Activated CD4-positive, alpha-beta memory T cell treated with anti-CD3 and anti-CD28 coated beads, Interleukin-2, amount 10 ng/mL, durations not matched to agents 7 days and 5 days (primary cell): ENCODE measurements at regions of chr18 and their contacts with region 1.

Region 1: DNA sequence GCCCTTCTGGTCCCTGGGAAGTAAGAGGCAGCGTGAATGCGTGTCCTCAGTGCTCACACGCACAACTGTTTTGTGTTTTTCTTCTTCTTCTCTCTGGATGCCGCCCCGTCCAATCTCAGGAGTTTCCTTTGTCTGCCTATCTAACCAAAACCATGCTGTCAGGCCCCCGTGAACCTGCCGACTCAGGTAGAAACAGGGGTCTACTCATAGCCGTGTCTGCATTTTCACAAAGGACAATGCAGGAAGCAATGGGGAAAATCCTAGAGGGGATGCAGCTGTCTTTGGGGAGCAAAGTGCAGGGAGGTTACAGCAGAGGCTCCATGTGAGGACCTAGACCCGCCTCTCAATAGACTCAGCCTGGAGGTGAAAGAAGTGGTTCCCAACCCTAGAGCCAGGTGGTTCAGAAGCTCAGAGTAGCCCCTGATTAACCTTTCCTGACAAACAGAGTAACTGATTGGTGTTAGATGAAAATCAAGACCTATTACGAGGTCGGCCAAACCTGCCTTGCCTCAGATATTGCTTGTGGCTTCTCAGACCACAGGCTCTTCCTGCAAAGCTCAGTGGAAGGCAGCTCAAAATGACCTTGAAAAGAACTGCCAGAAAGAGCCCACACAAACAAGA is 49.3 kb downstream of the CD226 start:
- DNase-seq: peak; percentile 62
- H3K4me3 Mint-ChIP-seq: peak overlapping the region; percentile 70
- H3K27ac Mint-ChIP-seq: peak overlapping the region; percentile 89
- H3K4me1 Mint-ChIP-seq: peaks cover 76% of the 10 kb centered on the region
- H3K27me3 Mint-ChIP-seq: no peaks in the 10 kb centered on the region

Region 2: DNA sequence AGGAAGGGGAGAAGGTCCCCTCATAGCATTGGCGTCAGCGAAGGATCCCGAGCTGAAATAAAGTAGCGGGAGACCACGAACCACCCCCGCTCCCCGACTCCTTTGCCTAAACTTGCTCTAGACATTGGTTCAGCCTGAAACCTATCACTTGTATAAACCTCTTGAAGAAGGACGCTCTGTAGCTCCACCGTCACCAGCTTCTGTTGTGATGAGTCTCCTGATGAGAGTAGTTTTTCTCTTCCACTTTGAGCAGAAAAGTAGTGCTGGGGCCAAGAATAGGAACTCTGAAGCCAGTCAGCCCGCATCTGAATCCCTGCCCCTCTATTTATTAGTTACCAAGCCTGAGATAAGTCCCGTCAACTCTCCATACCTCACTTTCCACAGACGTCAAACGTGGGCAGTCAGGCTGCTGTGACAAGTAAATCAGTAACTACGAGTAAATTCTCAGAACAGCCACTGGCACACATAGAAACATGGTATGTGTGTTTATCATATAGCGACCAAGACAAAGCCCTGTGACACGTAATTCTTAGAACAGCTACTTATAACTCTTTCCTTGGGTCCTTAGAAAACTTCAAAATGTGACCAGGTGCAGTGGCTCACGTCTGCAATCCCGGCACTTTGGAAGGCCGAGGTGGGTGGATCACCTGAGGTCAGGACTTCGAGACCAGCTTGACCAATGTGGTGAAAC is 12.4 kb before region 1 on chr18:
- CTCF ChIA-PET with region 1: interaction called, 9 read pairs
- POLR2A ChIA-PET with region 1: interaction called, 35 read pairs
- DNase-seq: peak; percentile 71
- H3K4me3 Mint-ChIP-seq: peak overlapping the region; percentile 60
- H3K27ac Mint-ChIP-seq: peak overlapping the region; percentile 90
- H3K4me1 Mint-ChIP-seq: peaks cover 78% of the 10 kb centered on the region
- H3K27me3 Mint-ChIP-seq: no peaks in the 10 kb centered on the region

Region 3: DNA sequence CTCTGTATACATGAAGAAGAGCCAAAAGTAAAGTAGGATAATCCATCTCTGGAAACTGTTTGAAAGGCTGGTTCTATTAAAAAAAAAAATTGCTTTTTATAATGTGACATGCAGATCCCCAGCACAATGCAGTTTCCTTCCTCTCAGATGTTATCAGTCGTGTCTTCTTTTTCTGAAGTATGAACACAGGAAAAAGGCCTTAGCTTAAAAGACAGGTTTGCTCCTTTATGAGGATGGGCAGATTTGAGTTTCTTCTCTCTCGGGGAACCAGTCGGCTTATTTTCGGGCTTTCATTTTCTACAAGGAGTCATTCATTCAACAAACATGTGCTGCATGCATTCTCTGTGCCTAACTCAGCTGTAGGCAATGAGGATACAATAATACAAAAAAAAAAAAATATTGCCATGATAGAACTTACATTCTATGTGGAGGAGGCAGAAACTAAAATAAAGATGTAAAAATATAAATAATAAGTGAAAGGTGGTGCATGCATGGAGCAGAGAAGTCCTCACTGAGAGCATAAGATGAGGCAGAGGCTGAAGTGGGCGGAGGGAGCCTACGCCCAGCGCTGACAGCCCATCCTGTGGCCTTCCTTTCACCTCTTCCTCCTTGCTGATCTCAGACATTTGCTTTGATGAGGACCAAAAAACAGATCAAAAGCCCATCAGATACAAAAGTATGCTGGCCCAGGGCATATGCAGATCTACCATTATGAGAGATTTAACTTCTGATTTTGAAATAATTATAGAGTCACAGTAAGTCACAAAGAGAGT is 49.2 kb after region 1 on chr18 and contains the start of gene CD226:
- CTCF ChIA-PET with region 1: interaction called, 4 read pairs
- POLR2A ChIA-PET with region 1: interaction called, 43 read pairs
- DNase-seq: peak; percentile 60
- H3K4me3 Mint-ChIP-seq: no peak within 1 kb of the TSS
- H3K27ac Mint-ChIP-seq: no peak within 1 kb of the TSS
- H3K4me1 Mint-ChIP-seq: peaks cover 48% of the 10 kb centered on the region
- H3K27me3 Mint-ChIP-seq: no peaks in the 10 kb centered on the region
- total RNA-seq, gene CD226: 102 to 111 TPM

Region 4: GRCh38 chr18:69958422-69958821 is 60.1 kb after region 1 on chr18:
- CTCF ChIA-PET with region 1: interaction called, 16 read pairs
- POLR2A ChIA-PET with region 1: interaction called, 40 read pairs
- DNase-seq: peak; percentile 52
- H3K4me3 Mint-ChIP-seq: no peak overlapping the region
- H3K27ac Mint-ChIP-seq: no peak overlapping the region
- H3K4me1 Mint-ChIP-seq: peaks cover 15% of the 10 kb centered on the region
- H3K27me3 Mint-ChIP-seq: no peaks in the 10 kb centered on the region